ENCODE measurements at regions of chr17 and their contacts with region 1.

Region 1: GRCh38 chr17:30906101-30906911 is at the start of gene TEFM:
- DNase-seq: peak; percentile 91
- H3K4me3 ChIP-seq: peak within 1 kb of the TSS; percentile 23 to 76 (median 68)
- H3K27ac ChIP-seq: peak within 1 kb of the TSS; percentile 85 to 95 (median 91)
- H3K4me1 ChIP-seq: peaks cover 5 to 21% (median 12%) of the 10 kb centered on the region in 4 donors
- H3K27me3 ChIP-seq: no peaks in the 10 kb centered on the region
- CTCF ChIP-seq: peak in 1 of 5 experiments; percentile 28
- EP300 ChIP-seq: no peak
- POLR2A ChIP-seq: peak; percentile 78
- total RNA-seq, gene TEFM: 1.8 to 15.0 (median 8.9) TPM

Region 2: DNA sequence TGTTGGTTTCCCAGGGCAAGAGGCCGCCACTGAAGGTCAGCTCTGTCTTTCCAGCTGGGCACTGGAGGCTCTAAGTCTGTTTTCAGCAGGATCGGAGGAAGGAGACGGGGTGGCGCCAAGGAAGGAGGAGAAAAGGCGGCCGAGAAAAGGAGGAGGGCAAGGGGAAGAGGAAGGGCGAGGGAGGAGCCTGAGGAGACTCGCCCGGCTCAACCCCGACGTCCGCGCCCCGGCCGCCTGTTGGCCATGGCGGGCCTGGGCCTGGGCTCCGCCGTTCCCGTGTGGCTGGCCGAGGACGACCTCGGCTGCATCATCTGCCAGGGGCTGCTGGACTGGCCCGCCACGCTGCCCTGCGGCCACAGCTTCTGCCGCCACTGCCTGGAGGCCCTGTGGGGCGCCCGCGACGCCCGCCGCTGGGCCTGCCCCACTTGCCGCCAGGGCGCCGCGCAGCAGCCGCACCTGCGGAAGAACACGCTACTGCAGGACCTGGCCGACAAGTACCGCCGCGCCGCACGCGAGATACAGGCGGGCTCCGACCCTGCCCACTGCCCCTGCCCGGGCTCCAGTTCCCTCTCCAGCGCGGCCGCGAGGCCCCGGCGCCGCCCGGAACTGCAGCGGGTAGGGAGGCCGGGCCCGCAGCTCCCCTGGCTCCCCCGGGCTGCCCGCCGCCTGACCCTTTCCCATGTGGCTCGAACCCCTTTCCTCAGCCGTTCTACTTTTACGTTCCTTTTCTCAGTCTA is 64.7 kb after region 1 on chr17 and contains the start of gene RNF135:
- in situ Hi-C with region 1: no loop called
- intact Hi-C with region 1: loop called (anchors 1 kb)
- DNase-seq: peak; percentile 88
- H3K4me3 ChIP-seq: peak within 1 kb of the TSS; percentile 65 to 76 (median 71)
- H3K27ac ChIP-seq: peak within 1 kb of the TSS; percentile 89 to 98 (median 96)
- H3K4me1 ChIP-seq: peaks cover 0 to 35% (median 15%) of the 10 kb centered on the region in 4 donors
- H3K27me3 ChIP-seq: no peaks in the 10 kb centered on the region
- CTCF ChIP-seq: peak; percentile 38 to 90 (median 43)
- EP300 ChIP-seq: no peak
- POLR2A ChIP-seq: peak; percentile 81
- total RNA-seq, gene RNF135: 9.0 to 34.1 (median 25.0) TPM

Region 3: DNA sequence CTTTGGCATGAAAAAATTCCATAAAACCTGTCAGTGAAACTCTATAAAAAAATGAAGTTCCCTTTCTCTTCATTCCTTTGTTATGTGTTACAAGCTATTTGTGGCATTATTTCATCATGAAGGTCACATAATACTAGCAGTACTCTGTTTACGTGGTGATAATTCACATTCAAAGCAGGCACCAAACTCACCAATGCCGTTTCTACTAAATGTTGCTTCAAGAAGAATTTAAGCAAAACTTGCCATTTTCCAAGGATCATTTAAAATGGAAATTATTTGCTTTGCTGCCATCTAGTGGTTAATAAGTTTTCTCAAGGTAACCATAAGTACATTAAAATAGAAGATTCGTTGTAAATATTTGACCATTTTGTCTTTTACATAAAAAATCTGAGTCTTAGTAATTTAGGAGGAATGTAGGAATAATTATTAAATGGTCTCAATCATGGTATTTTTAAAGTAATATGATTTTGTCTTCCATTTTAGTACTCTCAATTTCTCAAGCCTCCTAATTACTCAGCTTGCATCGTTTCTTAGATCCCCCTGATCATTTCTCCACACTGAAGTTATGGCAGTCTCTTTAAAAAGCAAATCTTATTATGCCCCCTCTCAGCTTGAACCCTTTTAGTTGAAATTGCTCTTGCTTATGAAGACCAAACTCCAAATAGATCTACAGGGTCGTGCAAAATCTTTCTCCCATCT is 309.9 kb after region 1 on chr17:
- in situ Hi-C with region 1: loop called in 1 of 4 experiments (anchors 25 kb)
- intact Hi-C with region 1: no loop called
- DNase-seq: no peak
- H3K4me3 ChIP-seq: no peak overlapping the region
- H3K27ac ChIP-seq: no peak overlapping the region
- H3K4me1 ChIP-seq: no peaks in the 10 kb centered on the region
- H3K27me3 ChIP-seq: no peaks in the 10 kb centered on the region
- CTCF ChIP-seq: peak; percentile 60 to 66 (median 65)
- EP300 ChIP-seq: no peak
- POLR2A ChIP-seq: no peak

Measured in transverse colon (tissue), 4 donors.